ENCODE measurements at regions of chr3 and their contacts with region 1.

Region 1: DNA sequence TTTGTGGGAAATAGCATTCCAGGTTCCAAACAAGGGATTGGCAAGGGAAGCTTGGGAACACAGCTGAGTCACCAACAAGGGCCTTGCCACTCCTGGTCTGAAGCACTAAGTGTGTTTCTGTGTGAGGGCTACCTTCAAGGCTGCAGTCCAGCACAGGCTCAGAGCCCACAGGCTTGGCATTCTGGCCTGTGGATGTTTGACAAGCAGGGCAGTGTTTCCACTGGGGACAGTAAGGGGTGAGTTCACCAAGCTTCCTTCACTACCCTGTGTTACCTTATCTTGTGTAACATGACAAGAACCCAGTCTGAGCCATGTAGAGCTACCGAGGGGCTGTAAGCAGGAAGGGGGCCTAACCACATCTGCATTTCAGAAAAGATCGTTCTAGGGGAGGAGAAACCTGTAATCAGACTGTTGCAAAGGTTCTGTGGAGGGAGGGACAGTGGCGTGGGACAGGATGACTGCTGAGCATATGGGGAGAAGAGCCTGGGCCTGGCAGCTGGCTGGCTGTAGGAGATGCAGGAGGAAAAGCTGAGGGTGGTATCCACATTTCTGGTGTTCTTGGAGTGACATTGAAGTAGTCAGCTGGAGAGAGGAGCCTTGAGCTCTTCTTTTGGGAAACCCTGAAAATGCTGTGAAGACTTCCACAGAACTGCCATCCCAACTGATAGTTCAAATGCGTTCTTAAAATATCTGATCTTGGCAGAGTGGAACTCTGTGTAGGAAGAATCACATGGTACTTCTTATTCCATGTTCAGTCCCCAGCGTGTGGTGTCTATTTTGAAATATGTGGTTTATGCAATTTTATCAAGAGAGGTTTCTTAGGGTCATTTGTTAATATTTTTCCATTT is 61.3 kb downstream of the CTDSPL start:
- DNase-seq: peak in 1 of 2 experiments; percentile 41
- H3K4me3 ChIP-seq: no peak overlapping the region
- H3K27ac ChIP-seq: no peak overlapping the region
- H3K4me1 ChIP-seq: peaks cover 0 to 1% (median 0%) of the 10 kb centered on the region in 4 experiments; a peak in 1 of 7 replicates
- H3K27me3 ChIP-seq: no peaks in the 10 kb centered on the region
- CTCF ChIP-seq: no peak
- EP300 ChIP-seq: no peak
- POLR2A ChIP-seq: no peak
- RAD21 ChIP-seq: no peak

Region 2: DNA sequence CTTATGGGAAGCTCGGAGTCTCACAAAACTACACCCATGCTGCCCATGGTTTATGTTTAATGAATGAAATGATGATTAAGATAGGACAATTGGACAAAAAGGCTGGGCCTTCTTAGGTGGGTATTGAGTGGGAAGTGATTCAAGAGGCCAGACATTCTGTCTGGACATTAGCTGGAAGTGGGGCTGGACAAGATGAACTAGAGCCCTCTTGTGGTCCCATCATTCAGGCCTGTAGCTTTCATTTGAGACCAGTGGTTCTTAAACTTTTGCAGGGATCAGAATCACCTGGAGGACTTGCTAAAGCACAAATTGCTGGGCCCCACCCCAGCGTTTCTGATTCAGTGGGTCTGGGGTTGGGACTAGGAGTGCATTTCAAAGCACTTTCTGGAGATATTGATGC is 351.7 kb before region 1 on chr3:
- CTCF ChIA-PET with region 1: no interaction called
- POLR2A ChIA-PET with region 1: no interaction called
- DNase-seq: no peak
- H3K4me3 ChIP-seq: no peak overlapping the region
- H3K27ac ChIP-seq: no peak overlapping the region
- H3K4me1 ChIP-seq: no peaks in the 10 kb centered on the region
- H3K27me3 ChIP-seq: no peaks in the 10 kb centered on the region
- CTCF ChIP-seq: no peak
- EP300 ChIP-seq: no peak
- POLR2A ChIP-seq: no peak
- RAD21 ChIP-seq: no peak; a peak in 1 of 4 replicates

Region 3: GRCh38 chr3:37907906-37908305 is 15.0 kb before region 1 on chr3:
- CTCF ChIA-PET with region 1: interaction called, 21 read pairs
- POLR2A ChIA-PET with region 1: interaction called, 4 read pairs
- DNase-seq: no peak
- H3K4me3 ChIP-seq: no peak overlapping the region
- H3K27ac ChIP-seq: no peak overlapping the region
- H3K4me1 ChIP-seq: peaks cover 1 to 14% (median 9%) of the 10 kb centered on the region in 4 experiments; a peak in 6 of 7 replicates
- H3K27me3 ChIP-seq: no peaks in the 10 kb centered on the region
- CTCF ChIP-seq: no peak
- EP300 ChIP-seq: no peak
- POLR2A ChIP-seq: no peak
- RAD21 ChIP-seq: no peak

Region 4: DNA sequence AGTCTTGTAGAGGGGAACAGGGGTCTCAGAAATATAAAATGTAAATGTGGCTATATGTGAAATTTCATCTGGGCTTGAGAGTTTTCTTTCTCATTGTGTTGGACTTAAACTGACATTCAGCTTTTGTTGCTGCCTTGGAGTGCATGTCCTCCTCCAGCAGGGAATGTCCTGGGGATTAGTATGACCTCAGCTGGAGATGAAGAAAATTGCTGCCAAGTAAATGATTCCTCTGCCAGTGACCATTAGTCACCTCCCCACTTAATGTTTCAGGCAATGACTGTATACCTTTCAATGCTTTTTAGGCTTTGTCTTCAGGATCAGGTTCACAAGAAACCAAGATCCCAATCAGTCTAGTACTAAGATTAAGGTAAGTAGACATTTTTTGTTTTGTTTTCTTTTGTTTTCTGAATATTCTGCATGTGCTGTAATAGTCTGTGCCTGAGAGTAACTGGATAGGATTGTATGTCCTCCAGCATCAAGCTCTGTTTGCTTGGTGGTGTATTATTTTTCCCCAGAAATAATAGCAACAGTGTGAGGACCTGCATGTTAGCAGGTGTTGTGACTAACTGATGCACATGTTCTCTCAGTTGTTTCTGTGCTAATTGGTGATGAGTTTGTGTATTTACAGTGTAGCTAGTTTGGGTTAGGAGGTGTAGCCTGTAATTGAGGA is 324.6 kb after region 1 on chr3:
- CTCF ChIA-PET with region 1: no interaction called
- POLR2A ChIA-PET with region 1: no interaction called
- DNase-seq: no peak
- H3K4me3 ChIP-seq: no peak overlapping the region
- H3K27ac ChIP-seq: no peak overlapping the region
- H3K4me1 ChIP-seq: no peaks in the 10 kb centered on the region
- H3K27me3 ChIP-seq: no peaks in the 10 kb centered on the region
- CTCF ChIP-seq: no peak
- EP300 ChIP-seq: no peak
- POLR2A ChIP-seq: no peak
- RAD21 ChIP-seq: 0 out of 4 replicates have a peak, but pooled peaks of 1 of the 2 experiments have one; percentile 4